Left lung (tissue), 14 donors: ENCODE measurements at regions of chr18 and their contacts with region 1.

Region 1: GRCh38 chr18:13629841-13630715 is 96.3 kb downstream of the FAM210A start:
- DNase-seq: peak in 2 of 4 donors; percentile 60 to 78
- ATAC-seq: peak; percentile 89
- H3K4me3 ChIP-seq: no peak overlapping the region
- H3K27ac ChIP-seq: no peak overlapping the region
- H3K4me1 ChIP-seq: peaks cover 0 to 8% of the 10 kb centered on the region in 2 donors
- H3K27me3 ChIP-seq: no peaks in the 10 kb centered on the region
- CTCF ChIP-seq: peak; percentile 63

Region 2: GRCh38 chr18:13289481-13290205 is 340.4 kb before region 1 on chr18:
- intact Hi-C with region 1: no loop called
- DNase-seq: no peak
- ATAC-seq: peak; percentile 77
- H3K4me3 ChIP-seq: no peak overlapping the region
- H3K27ac ChIP-seq: no peak overlapping the region
- H3K4me1 ChIP-seq: no peaks in the 10 kb centered on the region
- H3K27me3 ChIP-seq: no peaks in the 10 kb centered on the region
- CTCF ChIP-seq: no peak

Region 3: GRCh38 chr18:13464432-13465123 is 165.5 kb before region 1 on chr18:
- intact Hi-C with region 1: no loop called
- DNase-seq: peak in 3 of 4 donors; percentile 34 to 90 (median 67)
- ATAC-seq: peak; percentile 83
- H3K4me3 ChIP-seq: peak overlapping the region; percentile 5 to 43
- H3K27ac ChIP-seq: peak overlapping the region; percentile 19 to 88
- H3K4me1 ChIP-seq: peaks cover 6 to 31% of the 10 kb centered on the region in 2 donors
- H3K27me3 ChIP-seq: no peaks in the 10 kb centered on the region
- CTCF ChIP-seq: no peak

Region 4: GRCh38 chr18:13558124-13558523 is 72.0 kb before region 1 on chr18:
- intact Hi-C with region 1: loop called in 1 of 2 experiments (anchors 10 kb)
- DNase-seq: no peak
- ATAC-seq: peak; percentile 81
- H3K4me3 ChIP-seq: no peak overlapping the region
- H3K27ac ChIP-seq: no peak overlapping the region
- H3K4me1 ChIP-seq: peaks cover 0 to 10% of the 10 kb centered on the region in 2 donors
- H3K27me3 ChIP-seq: no peaks in the 10 kb centered on the region
- CTCF ChIP-seq: peak; percentile 44 to 66